ENCODE measurements at regions of chr6 and their contacts with region 1.

Region 1: DNA sequence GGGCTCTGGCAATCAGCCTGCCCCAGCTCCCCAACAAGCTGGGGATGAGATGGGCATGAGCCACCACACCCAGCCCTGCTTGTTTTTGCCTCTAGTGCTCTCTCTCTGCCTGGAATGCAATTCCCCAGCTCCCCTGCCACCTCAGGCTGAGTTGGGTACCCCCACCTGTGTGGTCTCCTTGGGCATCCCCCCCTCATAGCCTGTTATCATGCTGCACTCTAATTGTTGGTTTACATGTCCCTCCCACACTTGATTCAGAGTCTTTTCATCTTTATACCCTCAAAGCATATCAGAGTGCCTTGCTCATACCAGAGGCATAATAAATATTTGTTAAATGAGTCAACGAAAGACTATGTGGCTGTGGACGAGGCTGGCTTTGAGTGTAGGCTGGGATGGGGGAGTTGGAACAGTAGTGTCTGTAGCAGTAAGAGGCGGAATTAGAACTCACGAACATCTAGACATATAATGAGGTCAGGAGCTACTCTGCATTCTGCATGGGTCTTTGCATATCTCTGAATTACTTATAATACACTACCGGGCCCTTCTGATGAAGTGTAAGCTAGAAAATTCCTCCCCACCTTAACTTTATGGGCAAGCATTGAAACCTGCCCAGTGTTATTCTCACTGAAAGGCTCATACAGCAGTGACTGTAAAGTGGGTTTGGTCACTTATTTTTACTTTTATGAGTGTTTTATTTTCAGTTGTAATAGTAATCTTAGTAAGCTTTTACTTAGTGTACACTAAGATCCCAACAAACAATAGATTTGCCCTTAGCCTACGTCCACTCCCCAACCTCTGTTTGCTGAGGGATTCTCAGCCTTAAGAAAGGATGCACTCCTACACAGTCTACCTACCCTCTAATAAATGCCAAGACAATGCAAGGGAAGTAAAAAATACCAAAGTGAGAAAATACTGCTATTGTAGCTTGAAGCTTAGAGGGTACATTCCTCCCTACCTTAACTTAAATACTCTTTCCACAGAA is 58.7 kb downstream of the EDN1 start:
- DNase-seq: no peak
- ATAC-seq: no peak

Region 2: DNA sequence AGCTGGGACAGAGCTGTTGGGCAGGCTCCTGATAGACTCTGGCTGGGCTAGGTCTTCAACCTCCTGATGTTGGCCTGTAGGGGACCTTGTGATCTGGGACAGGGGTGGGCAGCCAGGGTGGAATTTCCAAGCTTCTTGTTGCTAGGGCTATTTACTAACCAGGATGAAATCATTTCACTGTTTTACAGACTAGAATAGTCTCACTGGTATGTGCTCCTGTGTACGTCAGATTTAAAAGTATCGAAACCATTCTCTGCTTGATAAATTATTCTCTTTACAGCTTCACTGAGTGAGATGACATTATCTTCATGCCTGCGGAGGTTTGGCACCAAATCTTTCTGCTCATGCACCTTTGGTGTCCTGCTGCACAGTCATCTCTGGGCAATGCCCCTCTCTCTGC is 47.8 kb before region 1 on chr6:
- intact Hi-C with region 1: loop called (anchors 2 kb)
- DNase-seq: no peak
- ATAC-seq: no peak

Region 3: GRCh38 chr6:12572896-12573827 is 224.3 kb after region 1 on chr6:
- intact Hi-C with region 1: no loop called
- DNase-seq: no peak
- ATAC-seq: no peak

Region 4: GRCh38 chr6:12769556-12770256 is 420.9 kb after region 1 on chr6:
- intact Hi-C with region 1: no loop called
- DNase-seq: no peak
- ATAC-seq: no peak

Measured in Right ventricle myocardium superior (tissue), 1 donor.